A549 (cell line): ENCODE measurements at regions of chr9 and their contacts with region 1.

Region 1: DNA sequence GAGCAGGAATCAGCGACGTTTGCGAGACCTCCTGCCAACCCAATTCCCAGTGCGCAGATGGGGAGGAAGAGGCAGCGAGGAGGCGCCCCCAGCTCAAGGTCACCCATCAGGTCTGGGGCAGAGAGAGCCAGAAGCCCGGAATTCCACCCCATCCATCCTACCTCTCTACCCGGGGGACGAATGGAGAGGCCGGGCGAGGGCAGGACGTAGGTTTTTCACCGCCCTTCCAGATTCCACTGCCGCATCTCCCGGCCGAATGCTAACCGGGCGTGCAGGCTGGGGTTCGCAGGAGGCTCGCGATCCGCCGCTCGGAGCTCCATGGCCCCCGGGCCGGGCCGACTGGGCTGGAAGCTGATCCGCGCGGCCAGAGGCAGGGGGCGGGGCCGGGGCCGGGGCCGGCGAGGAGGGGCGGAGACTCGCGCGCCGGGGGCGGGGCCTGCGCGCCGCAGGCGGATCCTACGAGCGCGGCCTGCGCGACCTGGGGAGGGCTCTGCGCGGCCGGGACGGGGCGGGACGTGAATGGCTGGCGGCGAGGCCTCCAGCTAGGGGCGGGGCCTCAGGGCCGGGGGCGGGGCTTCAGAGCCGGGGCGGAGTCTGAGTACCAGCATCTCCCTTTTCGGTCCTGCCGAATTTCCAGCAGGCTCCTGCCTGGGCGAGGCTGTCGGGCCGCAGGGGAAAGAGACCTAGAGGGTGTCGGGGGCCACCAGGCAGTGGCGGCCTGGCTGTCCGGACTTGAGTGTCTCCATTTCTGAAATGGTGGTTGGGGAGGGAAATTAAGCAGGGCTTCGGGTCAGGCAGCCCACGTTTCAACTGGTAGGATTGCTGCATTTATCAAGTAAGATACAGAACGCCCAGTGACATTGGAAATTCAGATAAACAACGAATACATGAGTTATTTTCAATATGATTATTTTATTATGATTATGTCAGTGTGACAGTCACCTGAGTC is at the start of gene ST6GALNAC4:
- DNase-seq: peak; percentile 74 to 89
- ATAC-seq: peak; percentile 42 to 74
- H3K4me3 ChIP-seq: peak within 1 kb of the TSS; percentile 65
- H3K27ac ChIP-seq: peak within 1 kb of the TSS; percentile 82 to 90
- H3K4me1 ChIP-seq: peaks cover 72% of the 10 kb centered on the region
- CTCF ChIP-seq: no peak
- EP300 ChIP-seq: no peak
- POLR2A ChIP-seq: peak; percentile 43; the same call in 1 of the 2 replicates
- RAD21 ChIP-seq: no peak
- polyA plus RNA-seq, gene ST6GALNAC4: 11.0 and 12.5 TPM in 2 replicates

Region 2: GRCh38 chr9:127586537-127586936 is 330.4 kb before region 1 on chr9:
- CTCF ChIA-PET with region 1: interaction called, 54 read pairs
- POLR2A ChIA-PET with region 1: no interaction called
- DNase-seq: peak; percentile 81 to 82
- ATAC-seq: peak; percentile 93 to 94
- H3K4me3 ChIP-seq: no peak overlapping the region
- H3K27ac ChIP-seq: peak overlapping the region; percentile 46 to 73; a peak in 4 of 6 replicates
- H3K4me1 ChIP-seq: peaks cover 38% of the 10 kb centered on the region; the same call in 2 of the 3 replicates
- CTCF ChIP-seq: peak; percentile 84
- EP300 ChIP-seq: no peak
- POLR2A ChIP-seq: no peak
- RAD21 ChIP-seq: peak; percentile 94 to 98

Region 3: DNA sequence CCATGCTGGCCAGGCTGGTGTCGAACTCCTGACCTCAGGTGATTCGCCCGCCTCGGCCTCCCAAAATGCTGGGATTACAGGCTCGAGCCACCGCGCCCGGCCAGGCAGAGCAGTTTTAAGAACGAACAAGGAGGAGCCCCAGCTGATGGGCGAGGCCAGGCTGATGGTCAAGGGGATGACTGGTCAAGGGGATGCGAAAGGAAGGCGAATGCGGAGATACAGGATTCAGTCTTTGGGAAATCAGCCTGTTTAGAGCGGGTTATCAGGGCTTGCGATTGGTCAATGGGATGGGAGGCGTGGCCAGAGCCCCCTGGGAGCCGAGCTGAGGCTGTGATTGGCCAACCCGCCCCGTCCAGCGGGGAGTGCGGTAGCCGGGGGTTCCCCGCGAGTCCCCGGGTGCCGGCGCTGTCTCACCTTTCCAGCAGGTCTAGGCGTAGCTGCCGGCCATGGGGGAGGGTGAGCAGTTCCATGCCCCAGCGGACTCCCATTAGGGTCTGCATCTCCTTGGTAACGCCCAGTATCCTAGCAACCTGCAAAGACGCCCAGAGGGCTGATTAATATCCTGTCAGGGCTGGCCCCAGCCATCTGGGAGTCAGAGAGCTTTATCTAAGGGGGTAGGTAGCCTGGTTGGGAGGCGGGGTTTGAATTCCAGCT is 174.4 kb before region 1 on chr9:
- CTCF ChIA-PET with region 1: interaction called, 45 read pairs
- POLR2A ChIA-PET with region 1: no interaction called
- DNase-seq: peak; percentile 88 to 94
- ATAC-seq: peak; percentile 73 to 87
- H3K4me3 ChIP-seq: peak overlapping the region; percentile 42
- H3K27ac ChIP-seq: peak overlapping the region; percentile 6 to 71; a peak in 4 of 6 replicates
- H3K4me1 ChIP-seq: peaks cover 31% of the 10 kb centered on the region
- CTCF ChIP-seq: no peak
- EP300 ChIP-seq: no peak
- POLR2A ChIP-seq: no peak
- RAD21 ChIP-seq: no peak

Region 4: DNA sequence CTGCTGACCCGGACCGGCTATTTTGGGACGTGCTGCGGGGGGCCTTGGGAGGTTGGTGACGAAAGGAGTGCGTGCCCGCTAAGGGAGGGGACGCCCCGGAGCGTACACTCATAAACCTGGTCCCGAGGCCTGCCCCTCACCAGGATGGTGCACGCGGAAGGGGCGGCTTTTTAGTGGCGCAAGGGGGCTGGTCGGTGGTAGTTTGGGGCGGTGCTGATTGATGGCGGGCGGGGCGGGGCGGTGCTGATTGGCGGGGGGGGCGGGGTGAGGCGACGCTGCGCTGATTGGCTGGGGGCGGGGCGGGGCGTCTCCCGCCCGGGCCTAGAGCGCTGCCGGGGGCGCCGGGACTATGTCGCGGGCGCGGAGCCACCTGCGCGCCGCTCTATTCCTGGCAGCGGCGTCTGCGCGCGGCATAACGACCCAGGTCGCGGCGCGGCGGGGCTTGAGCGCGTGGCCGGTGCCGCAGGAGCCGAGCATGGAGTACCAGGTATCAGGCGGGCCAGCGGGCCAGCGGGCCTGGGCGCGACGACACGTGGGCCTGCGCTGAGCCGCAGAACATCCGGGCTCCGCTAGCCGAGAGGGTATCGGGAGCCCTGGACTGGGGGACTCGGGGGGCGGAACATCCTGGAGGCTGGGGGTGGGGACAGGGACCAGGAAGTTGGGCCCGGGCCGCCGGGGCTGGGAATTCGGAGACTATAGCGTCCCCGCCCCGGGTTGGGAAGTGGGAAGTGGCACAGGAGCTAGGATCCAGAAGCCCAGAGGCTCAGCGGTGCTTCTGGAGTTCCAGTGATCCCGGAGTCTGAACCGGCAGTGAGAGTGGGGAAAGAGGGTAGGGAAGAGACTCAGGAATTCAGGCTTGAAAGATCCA is 114.1 kb before region 1 on chr9 and contains the start of gene FPGS:
- CTCF ChIA-PET with region 1: interaction called, 16 read pairs
- POLR2A ChIA-PET with region 1: no interaction called
- DNase-seq: peak; percentile 91 to 95
- ATAC-seq: peak; percentile 86 to 90
- H3K4me3 ChIP-seq: peak within 1 kb of the TSS; percentile 85
- H3K27ac ChIP-seq: peak within 1 kb of the TSS; percentile 93 to 96
- H3K4me1 ChIP-seq: peaks cover 38% of the 10 kb centered on the region
- CTCF ChIP-seq: 0 out of 3 replicates have a peak, but pooled peaks have one; percentile 3
- EP300 ChIP-seq: no peak
- POLR2A ChIP-seq: peak; percentile 62
- RAD21 ChIP-seq: 0 out of 5 replicates have a peak, but pooled peaks of 1 of the 2 experiments have one; percentile 12
- polyA plus RNA-seq, gene FPGS: 28.8 and 33.4 TPM in 2 replicates

Region 5: DNA sequence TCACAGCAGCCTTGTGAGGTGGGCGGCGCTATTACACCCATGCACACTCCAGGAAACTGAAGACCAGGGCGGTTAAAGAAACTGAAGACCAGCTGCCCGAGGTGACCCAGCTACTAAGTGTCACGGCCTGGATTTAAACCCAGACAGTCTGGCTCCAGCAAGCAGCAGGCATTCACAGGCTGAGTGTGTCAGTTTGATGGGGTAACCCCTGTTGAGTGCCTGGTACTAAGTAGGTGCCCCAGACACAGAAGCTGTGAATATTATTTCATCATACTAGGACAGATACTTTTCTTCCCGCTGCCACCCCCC is 69.8 kb before region 1 on chr9:
- CTCF ChIA-PET with region 1: no interaction called
- POLR2A ChIA-PET with region 1: no interaction called
- DNase-seq: no peak
- ATAC-seq: peak; percentile 27 to 40; a peak in 3 of 6 replicates
- H3K4me3 ChIP-seq: no peak overlapping the region
- H3K27ac ChIP-seq: no peak overlapping the region
- H3K4me1 ChIP-seq: no peaks in the 10 kb centered on the region
- CTCF ChIP-seq: no peak
- EP300 ChIP-seq: no peak
- POLR2A ChIP-seq: no peak
- RAD21 ChIP-seq: no peak

Region 6: DNA sequence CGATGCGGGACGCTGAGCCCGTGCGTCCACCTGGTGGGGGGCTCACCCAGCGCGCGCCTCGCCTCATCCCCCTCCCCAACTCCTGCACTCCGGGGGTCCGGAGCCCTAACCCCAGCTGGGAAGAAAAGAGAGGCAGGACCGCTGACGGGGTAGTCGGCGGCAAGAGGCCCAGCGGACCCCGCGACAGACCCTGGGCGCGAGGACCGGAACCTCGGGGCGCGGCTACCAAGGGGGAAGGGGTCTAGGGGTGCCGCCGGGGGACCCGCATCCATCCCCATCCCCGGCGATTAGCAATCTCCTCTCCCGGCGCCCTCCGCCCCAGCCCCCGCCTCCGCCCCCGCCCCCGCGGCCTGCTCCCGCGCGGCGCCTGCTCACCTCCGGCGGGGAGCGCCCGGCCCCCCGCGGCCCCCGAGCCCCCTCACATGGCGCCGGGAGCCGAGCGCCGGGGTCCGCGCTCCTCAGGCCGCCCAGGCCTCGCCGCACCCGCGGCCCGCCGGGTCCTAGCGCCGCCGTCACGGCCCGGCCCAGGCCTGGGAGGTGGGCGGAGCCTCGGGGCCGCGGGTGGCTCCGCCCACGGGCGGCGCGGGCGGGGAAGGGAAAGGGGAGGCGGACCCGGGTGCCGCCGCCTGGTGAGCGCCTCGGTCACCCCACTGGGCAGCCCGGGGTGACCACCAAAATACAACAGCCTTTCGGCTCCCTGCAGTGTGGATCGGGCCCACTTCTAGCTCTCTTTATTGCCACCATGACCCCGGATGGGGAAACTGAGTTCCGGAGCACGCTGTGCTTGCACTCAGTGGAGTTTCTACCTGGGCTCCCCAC is 17.6 kb before region 1 on chr9 and contains the start of gene ST6GALNAC6:
- CTCF ChIA-PET with region 1: interaction called, 26 read pairs
- POLR2A ChIA-PET with region 1: interaction called, 3 read pairs
- DNase-seq: peak; percentile 65 to 69
- ATAC-seq: peak; percentile 74
- H3K4me3 ChIP-seq: peak within 1 kb of the TSS; percentile 76
- H3K27ac ChIP-seq: peak within 1 kb of the TSS; percentile 85 to 94
- H3K4me1 ChIP-seq: peaks cover 33% of the 10 kb centered on the region
- CTCF ChIP-seq: no peak
- EP300 ChIP-seq: no peak
- POLR2A ChIP-seq: peak; percentile 36
- RAD21 ChIP-seq: no peak
- polyA plus RNA-seq, gene ST6GALNAC6: 8.2 and 14.7 TPM in 2 replicates

Region 7: DNA sequence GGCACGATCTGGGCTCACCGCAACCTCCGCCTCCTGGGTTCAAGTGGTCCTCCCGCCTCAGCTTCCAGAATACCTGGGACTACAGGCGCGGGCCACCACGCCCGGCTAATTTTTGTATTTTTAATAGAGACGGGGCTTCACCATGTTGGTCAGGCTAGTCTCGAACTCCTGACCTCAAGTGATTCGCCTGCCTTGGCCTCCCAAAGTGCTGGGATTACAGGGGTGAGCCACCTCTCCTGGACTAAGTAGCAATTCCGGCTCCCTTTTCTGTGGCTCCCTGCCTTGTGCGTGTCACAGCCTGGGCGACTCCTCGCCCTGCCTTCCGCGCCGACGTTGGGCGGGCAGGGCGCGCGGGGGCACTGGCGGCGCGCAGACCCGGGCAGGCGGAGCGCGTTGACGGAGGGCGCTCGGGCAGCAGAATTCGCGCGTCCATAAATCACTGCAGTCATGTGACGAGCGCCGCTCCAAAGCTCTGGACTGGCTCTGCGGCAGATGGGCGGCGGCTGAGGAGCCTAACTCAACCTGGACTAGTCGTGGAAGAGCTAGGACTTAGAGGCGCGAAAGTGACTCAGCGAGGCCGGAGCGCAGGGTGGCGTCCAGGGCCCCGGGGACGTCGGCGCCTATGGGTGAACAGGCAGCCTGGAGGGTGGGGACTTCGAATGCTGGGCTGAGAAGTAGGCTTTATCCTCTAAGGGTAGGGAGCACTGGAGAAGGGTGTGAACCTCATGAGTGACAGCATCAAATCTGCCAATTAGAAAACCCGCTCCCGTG is 275.8 kb after region 1 on chr9:
- CTCF ChIA-PET with region 1: no interaction called
- POLR2A ChIA-PET with region 1: no interaction called
- DNase-seq: peak; percentile 88 to 97
- ATAC-seq: peak; percentile 85 to 91
- H3K4me3 ChIP-seq: peak overlapping the region; percentile 86
- H3K27ac ChIP-seq: peak overlapping the region; percentile 98 to 99
- H3K4me1 ChIP-seq: peaks cover 17% of the 10 kb centered on the region
- CTCF ChIP-seq: peak; percentile 26; the same call in 1 of the 3 replicates
- EP300 ChIP-seq: no peak
- POLR2A ChIP-seq: peak; percentile 29
- RAD21 ChIP-seq: peak; percentile 15 to 49; a peak in 4 of 5 replicates